ENCODE measurements at regions of chr19 and their contacts with region 1.

Region 1: GRCh38 chr19:5873617-5874199 is 3.4 kb upstream of the FUT5 start:
- DNase-seq: no peak
- H3K4me3 ChIP-seq: no peak overlapping the region
- H3K27ac ChIP-seq: no peak overlapping the region
- H3K4me1 ChIP-seq: no peaks in the 10 kb centered on the region
- H3K27me3 ChIP-seq: no peaks in the 10 kb centered on the region
- CTCF ChIP-seq: no peak

Region 2: DNA sequence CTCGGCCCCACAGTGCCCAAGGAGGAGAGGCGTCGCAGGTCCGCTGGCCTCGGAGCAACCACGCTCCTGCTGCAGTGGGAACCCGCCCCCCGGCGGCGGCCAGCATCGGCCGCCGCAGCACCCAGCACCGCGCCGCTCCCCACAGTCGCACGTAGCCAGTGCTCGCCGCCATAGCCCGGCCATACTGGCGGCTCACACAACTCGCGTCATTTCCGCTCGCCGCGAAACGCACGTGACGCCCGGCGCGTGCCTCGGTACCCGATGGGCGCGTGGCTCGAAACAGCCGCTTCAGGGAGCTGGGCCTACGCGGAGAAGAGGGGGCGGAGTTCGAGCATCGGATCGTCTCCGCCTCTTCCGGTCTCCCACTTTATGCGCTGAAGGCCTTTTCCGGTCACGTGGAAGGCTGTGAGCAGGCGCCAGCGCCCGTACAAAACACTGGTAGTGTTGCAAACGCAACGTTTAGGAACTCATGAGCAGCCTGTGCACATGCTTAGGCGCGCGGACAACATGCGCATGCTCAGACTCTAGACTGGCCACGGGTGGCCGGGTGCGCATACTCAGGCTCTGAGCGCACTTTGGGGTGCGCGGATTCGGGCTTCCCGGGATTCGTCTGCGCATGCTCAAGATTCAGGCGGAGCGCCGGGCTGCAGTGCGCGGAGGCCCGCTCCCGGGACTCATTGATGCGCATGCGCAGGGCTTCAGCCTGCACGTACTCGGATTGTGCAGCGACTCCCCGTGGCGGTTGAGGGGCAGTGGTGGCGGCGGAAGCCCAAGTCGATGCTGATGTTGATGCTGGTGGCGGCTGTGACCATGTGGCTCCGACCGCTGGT is 153.5 kb before region 1 on chr19 and contains the starts of genes CATSPERD and LONP1:
- CTCF ChIA-PET with region 1: no interaction called
- POLR2A ChIA-PET with region 1: interaction called, 19 read pairs
- intact Hi-C with region 1: no loop called
- DNase-seq: peak; percentile 90 to 92
- H3K4me3 ChIP-seq: peak within 1 kb of the TSS; percentile 97
- H3K27ac ChIP-seq: peak within 1 kb of the TSS; percentile 99
- H3K4me1 ChIP-seq: peaks cover 9% of the 10 kb centered on the region
- H3K27me3 ChIP-seq: no peaks in the 10 kb centered on the region
- CTCF ChIP-seq: peak; percentile 70
- total RNA-seq, gene CATSPERD: not detected in 2 replicates
- total RNA-seq, gene LONP1: 78.2 and 140 TPM in 2 replicates

Region 3: GRCh38 chr19:5850743-5851293 is 22.9 kb before region 1 on chr19:
- CTCF ChIA-PET with region 1: no interaction called
- POLR2A ChIA-PET with region 1: no interaction called
- intact Hi-C with region 1: no loop called
- DNase-seq: peak; percentile 66 to 78
- H3K4me3 ChIP-seq: peak overlapping the region; percentile 73
- H3K27ac ChIP-seq: peak overlapping the region; percentile 98
- H3K4me1 ChIP-seq: peaks cover 29% of the 10 kb centered on the region
- H3K27me3 ChIP-seq: no peaks in the 10 kb centered on the region
- CTCF ChIP-seq: no peak